ENCODE measurements at regions of chr14 and their contacts with region 1.

Region 1: GRCh38 chr14:51035611-51036213 is 59.2 kb downstream of the TRIM9 start:
- DNase-seq: no peak
- ATAC-seq: no peak
- H3K4me3 ChIP-seq: no peak overlapping the region
- H3K27ac ChIP-seq: no peak overlapping the region
- H3K4me1 ChIP-seq: no peaks in the 10 kb centered on the region
- H3K27me3 ChIP-seq: no peaks in the 10 kb centered on the region
- CTCF ChIP-seq: no peak

Region 2: DNA sequence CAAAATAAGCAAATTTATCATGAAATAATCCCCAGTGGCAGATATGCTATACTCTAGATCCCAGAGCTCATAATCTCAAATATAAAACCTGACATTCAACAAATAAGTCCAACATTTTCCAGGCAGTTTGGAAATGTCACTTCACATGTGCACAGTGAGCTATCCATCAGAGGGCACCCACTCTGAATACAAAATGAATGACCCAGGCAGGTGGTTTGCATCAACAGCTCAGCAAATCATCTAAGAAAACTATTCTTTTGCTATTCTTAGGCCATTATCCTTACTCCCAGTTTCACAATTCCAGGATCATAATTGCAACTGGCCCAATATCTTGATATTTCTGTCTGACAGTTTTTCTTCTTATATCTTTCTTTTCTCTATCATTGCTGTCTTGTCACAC is 20.7 kb after region 1 on chr14:
- intact Hi-C with region 1: loop called in 1 of 10 experiments (anchors 1 kb)
- DNase-seq: no peak
- ATAC-seq: no peak
- H3K4me3 ChIP-seq: no peak overlapping the region
- H3K27ac ChIP-seq: no peak overlapping the region
- H3K4me1 ChIP-seq: no peaks in the 10 kb centered on the region
- H3K27me3 ChIP-seq: no peaks in the 10 kb centered on the region
- CTCF ChIP-seq: no peak

Measured in heart right ventricle (tissue), 16 donors.